ENCODE measurements at regions of chr12 and their contacts with region 1.

Region 1: DNA sequence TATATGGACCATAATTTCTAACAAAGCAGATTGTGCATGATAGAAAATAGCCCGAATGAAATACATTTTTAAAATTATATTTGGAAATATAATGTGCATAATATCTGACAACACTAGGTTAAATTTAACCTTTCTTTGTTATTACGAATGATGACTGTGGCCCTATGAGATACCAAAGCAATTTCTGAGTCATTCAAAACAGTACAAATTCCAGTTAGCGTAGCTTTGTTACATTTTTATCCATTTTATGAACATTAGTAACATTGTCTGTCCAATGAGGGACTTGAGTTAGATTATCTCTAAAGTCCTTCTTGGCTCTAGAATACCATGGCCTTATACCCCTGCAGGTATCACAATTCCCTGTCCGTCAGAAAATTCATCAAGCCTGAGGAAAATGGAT is 39.0 kb upstream of the REP15 start:
- DNase-seq: no peak
- H3K4me3 ChIP-seq: no peak overlapping the region
- H3K27ac ChIP-seq: no peak overlapping the region
- H3K4me1 ChIP-seq: peaks cover 0 to 4% (median 0%) of the 10 kb centered on the region in 4 donors
- H3K27me3 ChIP-seq: no peaks in the 10 kb centered on the region
- CTCF ChIP-seq: no peak
- EP300 ChIP-seq: no peak
- POLR2A ChIP-seq: no peak

Region 2: GRCh38 chr12:27434673-27435565 is 222.4 kb before region 1 on chr12:
- intact Hi-C with region 1: loop called (anchors 5 kb)
- DNase-seq: peak in 1 of 2 donors; percentile 26
- H3K4me3 ChIP-seq: no peak overlapping the region
- H3K27ac ChIP-seq: no peak overlapping the region
- H3K4me1 ChIP-seq: peaks cover 0 to 4% (median 0%) of the 10 kb centered on the region in 4 donors
- H3K27me3 ChIP-seq: no peaks in the 10 kb centered on the region
- CTCF ChIP-seq: peak in 4 of 7 experiments; percentile 19 to 77 (median 52)
- EP300 ChIP-seq: no peak
- POLR2A ChIP-seq: no peak

Region 3: DNA sequence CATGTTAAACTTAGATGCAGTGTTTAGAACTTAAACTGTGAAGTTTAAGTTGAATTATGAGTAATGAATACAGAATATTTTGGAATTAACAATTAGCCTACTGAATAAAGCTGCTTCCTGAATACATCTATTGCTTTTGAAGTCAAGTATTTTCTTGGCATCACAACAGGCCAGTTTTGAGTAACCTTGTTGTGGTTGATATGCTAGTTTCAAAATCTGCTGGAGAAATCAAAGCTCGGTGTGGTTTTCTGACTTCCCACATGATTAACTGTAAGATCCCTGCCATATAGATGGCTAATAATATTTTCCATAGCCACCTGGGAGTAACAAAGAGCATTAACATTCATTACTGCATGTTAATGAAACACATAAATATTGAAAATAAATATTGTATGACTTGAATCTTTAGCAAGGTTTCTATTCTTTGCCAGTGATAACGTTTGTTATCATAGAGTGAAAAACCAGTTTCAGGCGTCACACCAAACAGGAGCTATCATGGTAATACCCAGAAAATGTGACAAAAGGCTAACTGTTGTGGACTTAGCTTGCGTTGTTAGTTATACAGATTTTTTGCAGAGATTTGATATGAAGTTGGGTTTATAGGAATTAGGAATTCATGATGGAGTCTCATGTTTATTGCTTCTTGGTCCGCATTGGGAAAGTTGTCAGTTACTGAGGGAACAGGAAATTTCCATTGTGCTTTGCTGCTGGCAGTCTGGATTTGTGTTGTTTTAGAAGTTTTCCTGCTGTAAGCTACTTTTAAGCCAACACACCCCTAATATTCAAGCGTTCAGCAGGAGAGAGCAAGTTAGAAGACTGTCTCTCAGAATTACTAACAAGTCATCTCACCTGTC is 101.1 kb before region 1 on chr12:
- intact Hi-C with region 1: no loop called
- DNase-seq: no peak
- H3K4me3 ChIP-seq: peak overlapping the region in 1 of 4 donors; percentile 21
- H3K27ac ChIP-seq: peak overlapping the region in 3 of 5 donors; percentile 59 to 74 (median 67)
- H3K4me1 ChIP-seq: peaks cover 8 to 68% (median 21%) of the 10 kb centered on the region in 4 donors
- H3K27me3 ChIP-seq: no peaks in the 10 kb centered on the region
- CTCF ChIP-seq: no peak
- EP300 ChIP-seq: no peak
- POLR2A ChIP-seq: no peak

Region 4: DNA sequence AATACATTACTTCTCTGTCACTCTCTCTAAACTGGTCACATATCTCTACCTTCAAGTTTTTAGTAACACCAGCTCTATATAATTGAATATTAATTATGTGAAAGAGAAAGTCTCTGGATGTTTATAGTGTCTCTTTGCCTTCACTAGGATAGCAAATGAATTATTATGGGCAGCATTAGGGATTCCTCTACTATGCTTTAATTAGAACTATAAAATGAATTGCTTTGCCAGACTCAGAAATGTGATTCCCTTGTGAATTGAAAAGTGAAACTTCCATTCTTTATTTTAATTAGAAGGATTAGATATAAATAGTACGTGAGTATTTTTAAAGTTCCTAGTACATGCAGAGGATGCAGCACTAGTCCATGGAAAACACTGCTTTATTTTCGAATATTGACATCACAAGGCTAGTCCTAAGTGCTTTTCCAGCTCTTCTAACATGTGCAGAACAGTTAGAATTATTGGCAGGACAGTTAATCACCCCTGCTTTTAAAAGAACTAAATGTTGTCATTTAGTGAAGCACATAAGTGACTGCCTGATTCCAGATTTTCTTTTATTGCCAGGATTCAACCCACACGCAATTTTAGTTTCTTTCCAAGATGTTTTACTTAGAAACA is 15.9 kb after region 1 on chr12:
- intact Hi-C with region 1: no loop called
- DNase-seq: no peak
- H3K4me3 ChIP-seq: no peak overlapping the region
- H3K27ac ChIP-seq: peak overlapping the region in 2 of 5 donors; percentile 12 to 33
- H3K4me1 ChIP-seq: peaks cover 0 to 15% (median 7%) of the 10 kb centered on the region in 4 donors
- H3K27me3 ChIP-seq: no peaks in the 10 kb centered on the region
- CTCF ChIP-seq: no peak
- EP300 ChIP-seq: no peak
- POLR2A ChIP-seq: no peak

Region 5: DNA sequence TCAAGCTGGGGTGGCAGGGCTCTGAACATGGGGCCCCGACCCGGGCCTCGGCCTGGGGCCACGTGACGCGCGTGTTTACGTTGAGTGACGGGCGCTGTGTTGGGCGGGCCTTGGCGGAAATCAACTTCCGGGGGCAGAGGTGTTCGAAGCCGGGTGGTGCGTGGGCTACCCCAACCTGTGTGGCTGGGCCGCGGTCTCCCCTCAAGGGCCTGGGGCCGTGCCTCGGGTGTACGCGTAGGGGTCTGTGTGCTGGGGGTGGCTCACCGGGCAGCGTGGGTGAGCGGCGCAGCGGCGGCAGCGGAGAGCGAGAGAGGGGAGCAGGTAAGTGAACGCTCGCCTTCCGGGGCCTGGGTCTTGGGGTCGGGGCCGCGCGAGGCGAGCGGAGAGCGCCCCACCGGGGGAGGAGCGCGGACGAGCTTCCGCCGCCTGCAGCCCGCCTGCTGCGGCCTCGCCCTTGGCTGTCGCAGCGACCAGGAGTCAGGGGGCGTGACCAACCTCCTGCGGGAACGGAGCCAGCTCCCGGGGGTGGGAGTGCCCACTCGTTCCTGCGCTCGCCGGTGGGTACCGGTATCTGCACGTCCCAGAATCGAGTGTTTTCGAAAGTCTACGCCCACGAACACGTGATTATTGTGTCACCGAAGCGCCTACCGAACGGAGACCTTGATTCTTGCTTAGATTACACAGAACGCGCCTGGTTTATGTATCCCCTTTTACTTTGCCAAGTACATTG is 533.2 kb after region 1 on chr12 and contains the start of gene CCDC91:
- intact Hi-C with region 1: no loop called
- DNase-seq: peak; percentile 88 to 97
- H3K4me3 ChIP-seq: peak within 1 kb of the TSS; percentile 67 to 87 (median 80)
- H3K27ac ChIP-seq: peak within 1 kb of the TSS; percentile 97 to 99 (median 99)
- H3K4me1 ChIP-seq: peaks cover 5 to 27% (median 17%) of the 10 kb centered on the region in 4 donors
- H3K27me3 ChIP-seq: no peaks in the 10 kb centered on the region
- CTCF ChIP-seq: peak in 2 of 7 experiments; percentile 9 to 11
- EP300 ChIP-seq: no peak
- POLR2A ChIP-seq: peak in 1 of 4 donors; percentile 27
- total RNA-seq, gene CCDC91: 17.4 to 69.6 (median 54.7) TPM

Measured in stomach (tissue), 19 donors.